Tibial artery (tissue), 4 donors: ENCODE measurements at regions of chr9 and their contacts with region 1.

Region 1: DNA sequence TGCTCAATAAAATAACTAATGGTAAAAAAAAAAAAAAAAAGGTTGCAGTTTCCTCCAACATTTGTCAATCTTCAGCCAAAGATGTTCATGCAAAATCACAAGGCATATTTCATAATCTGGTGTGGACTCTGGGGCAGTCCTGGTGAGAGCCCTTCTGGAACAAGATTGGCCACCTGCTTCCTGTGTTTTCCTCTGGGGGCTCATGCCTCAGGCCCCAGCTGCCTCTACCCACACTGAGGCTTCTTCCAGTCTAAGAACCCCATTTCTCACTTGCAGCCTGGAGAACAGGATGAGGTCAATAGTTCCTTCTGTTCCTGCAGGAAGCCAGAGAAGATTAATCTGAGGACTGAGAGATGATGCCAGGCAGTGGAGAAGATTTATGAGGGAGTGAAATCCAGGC is 492.6 kb upstream of the BRINP1 start:
- DNase-seq: peak; percentile 25 to 62
- H3K4me3 ChIP-seq: no peak overlapping the region
- H3K27ac ChIP-seq: no peak overlapping the region
- H3K4me1 ChIP-seq: no peaks in the 10 kb centered on the region
- H3K27me3 ChIP-seq: no peaks in the 10 kb centered on the region
- CTCF ChIP-seq: no peak

Region 2: DNA sequence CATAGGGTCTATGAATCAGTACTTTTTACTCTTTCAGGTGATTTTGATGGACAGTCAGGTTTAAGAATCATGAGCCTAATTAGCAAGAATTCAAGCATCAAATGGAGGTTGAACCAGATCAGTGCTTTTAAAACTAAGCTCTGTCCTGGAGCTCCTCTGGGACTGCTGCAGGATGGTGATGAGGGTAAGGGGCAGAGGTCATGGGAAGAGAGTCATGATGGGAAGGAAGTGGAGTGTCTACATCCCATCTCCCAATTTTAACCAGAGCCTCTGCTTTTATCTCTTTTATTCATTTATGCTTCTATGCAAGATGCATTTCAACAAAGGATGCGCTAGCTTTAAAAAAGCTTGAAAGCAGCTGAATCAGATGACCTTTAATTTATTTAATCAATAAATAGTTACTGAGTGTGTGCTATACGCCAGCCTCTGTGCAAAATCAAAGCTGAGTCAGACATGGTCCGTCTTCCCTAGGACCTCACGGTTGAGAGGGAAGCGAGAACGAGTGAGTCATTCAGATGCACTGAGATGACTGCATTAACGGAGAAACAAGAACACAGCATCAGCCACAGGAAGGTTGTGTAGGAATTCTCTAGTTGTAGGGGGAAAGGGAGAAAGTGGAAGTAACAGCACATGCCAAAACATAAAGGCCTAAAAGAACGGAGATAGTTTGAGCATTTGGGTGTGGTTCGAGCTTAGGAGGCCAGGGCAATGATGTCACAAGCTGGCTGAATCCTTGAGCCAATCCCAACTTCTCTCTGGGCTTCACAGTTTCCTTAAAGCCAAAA is 51.0 kb before region 1 on chr9:
- intact Hi-C with region 1: no loop called
- DNase-seq: peak in 1 of 2 donors; percentile 62
- H3K4me3 ChIP-seq: no peak overlapping the region
- H3K27ac ChIP-seq: peak overlapping the region; percentile 11 to 18
- H3K4me1 ChIP-seq: no peaks in the 10 kb centered on the region
- H3K27me3 ChIP-seq: no peaks in the 10 kb centered on the region
- CTCF ChIP-seq: no peak

Region 3: GRCh38 chr9:119873878-119874277 is 12.0 kb after region 1 on chr9:
- intact Hi-C with region 1: loop called (anchors 1 kb)
- DNase-seq: no peak
- H3K4me3 ChIP-seq: no peak overlapping the region
- H3K27ac ChIP-seq: no peak overlapping the region
- H3K4me1 ChIP-seq: no peaks in the 10 kb centered on the region
- H3K27me3 ChIP-seq: no peaks in the 10 kb centered on the region
- CTCF ChIP-seq: no peak